Right cardiac atrium (tissue), 5 donors: ENCODE measurements at regions of chr1 and their contacts with region 1.

Region 1: DNA sequence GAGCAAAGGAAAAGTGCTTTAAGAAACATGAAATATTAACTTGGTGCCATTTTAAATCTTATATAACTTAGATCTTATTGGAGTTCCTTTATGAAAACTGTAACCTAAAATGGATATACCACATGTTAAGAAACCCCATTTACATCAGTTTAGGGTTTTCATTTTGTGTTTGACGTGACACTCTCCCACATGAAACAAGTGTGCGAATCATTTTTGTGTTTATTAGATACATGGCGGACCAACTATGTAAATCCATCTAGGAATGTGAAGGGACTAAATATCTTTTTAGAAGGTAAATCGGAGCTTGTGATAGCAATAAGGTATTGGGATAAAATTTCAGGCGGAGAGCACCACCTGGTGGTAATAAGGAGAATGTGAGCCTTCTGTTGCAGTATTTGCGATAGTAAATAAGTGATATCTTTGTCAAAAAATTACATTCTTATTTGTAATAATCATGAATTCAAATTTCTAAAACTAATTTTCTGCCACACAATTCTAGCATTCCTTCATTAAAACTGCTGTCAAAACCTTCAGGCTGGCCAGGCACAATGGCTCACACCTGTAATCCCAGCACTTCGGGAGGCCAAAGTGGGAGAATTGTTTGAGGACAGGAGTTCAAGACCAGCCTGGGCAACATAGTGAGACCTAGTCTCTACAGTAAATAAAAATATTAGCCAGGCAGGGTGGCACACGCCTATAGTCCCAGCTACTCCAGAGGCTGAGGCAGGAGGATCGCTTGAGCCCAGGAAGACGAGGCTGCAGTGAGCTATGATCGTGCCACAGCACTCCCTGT is 31.3 kb downstream of the SMAP2 start:
- DNase-seq: no peak
- ATAC-seq: no peak
- H3K4me3 ChIP-seq: no peak overlapping the region
- H3K27ac ChIP-seq: no peak overlapping the region
- H3K4me1 ChIP-seq: no peaks in the 10 kb centered on the region
- H3K27me3 ChIP-seq: no peaks in the 10 kb centered on the region

Region 2: DNA sequence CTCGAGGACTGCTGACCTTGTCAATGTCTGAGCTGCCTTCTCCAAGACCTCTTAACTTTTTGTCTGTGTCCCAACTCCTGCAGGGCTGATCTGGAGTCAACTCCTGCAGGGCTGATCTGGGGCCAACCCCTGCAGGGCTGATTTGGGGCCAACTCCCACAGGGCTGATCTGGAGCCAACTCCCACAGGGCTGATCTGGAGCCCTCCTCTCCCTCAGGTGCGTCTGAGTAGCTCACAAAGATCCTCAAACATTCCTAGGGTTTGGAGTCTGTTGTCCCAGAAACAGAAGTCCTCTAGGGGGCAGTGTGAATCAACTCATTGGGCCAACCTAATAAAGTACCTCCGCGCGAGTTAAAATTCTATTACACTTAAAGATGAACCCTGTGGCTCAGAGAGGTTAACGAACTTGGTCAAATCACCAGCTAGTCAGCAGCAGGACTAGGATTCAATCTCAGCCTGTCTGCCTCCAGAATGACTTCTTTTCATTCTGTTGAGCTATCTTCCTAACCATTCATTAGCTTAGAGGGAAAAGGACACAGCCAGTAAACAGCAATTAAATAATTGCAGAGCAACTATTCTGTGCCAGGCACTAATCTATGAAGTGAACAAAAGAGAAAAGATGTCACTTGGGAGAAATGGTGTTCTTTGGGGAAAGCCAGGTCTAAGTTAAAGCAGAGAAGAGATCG is 260.8 kb before region 1 on chr1:
- intact Hi-C with region 1: loop called (anchors 5 to 10 kb)
- DNase-seq: peak in 2 of 3 donors; percentile 18 to 48
- ATAC-seq: peak; percentile 78 to 83
- H3K4me3 ChIP-seq: no peak overlapping the region
- H3K27ac ChIP-seq: no peak overlapping the region
- H3K4me1 ChIP-seq: no peaks in the 10 kb centered on the region
- H3K27me3 ChIP-seq: no peaks in the 10 kb centered on the region

Region 3: GRCh38 chr1:40153073-40153770 is 251.6 kb before region 1 on chr1:
- intact Hi-C with region 1: loop called (anchors 5 to 10 kb)
- DNase-seq: no peak
- ATAC-seq: peak; percentile 39 to 43
- H3K4me3 ChIP-seq: no peak overlapping the region
- H3K27ac ChIP-seq: no peak overlapping the region
- H3K4me1 ChIP-seq: no peaks in the 10 kb centered on the region
- H3K27me3 ChIP-seq: no peaks in the 10 kb centered on the region

Region 4: DNA sequence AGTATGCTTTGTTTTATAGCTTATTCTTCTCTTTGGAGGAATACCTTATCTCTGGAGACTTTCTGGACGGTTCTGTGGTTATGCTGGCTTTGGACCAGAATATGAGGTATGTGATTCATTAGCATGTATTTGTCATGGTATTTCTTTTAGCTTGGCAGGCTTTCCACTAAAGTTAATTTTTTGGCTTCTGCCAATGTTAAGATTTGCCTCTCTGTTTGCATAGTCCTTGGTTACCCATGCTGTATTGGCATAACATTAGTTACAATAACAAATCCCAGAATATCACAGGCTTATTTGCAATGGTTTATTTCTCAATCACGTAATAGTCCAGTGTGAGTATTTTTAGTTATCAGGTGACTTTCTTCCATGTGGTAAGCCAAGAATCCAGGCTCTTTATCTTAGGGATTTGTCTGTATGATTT is 137.1 kb before region 1 on chr1:
- intact Hi-C with region 1: no loop called
- DNase-seq: no peak
- ATAC-seq: peak; percentile 92
- H3K4me3 ChIP-seq: no peak overlapping the region
- H3K27ac ChIP-seq: no peak overlapping the region
- H3K4me1 ChIP-seq: peaks cover 2% of the 10 kb centered on the region
- H3K27me3 ChIP-seq: no peaks in the 10 kb centered on the region

Region 5: DNA sequence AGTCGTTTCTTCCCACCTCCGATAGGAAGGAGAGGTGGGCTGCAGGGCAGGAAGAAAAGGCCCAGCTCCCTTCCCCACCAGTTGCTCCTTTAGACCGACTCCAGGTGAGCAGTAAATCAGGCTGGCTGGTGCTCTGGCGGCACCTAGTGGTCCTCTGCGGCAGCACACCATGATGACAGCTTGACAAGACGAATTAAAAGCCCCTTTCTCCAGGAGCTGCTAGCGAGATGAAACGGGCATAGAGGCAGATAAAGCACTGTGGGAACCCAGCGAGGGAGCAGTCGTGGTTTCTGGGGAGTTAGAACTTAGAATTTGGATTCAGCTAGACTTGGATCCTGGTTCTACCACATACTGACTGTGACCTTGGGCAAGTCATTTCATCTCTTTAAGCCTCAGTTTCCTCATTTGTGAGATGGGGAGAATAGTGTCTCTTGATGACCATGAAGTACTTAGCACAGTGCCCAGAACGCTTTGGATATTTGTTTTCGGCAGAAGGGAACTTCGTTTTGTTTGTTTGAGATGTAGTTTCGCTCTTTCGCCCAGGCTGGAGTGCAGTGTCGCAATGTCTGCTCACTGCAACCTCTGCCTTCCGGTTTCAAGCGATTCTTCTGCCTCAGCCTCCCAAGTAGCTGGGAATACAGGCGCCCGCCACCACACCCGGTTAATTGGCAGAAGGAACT is 66.0 kb before region 1 on chr1:
- intact Hi-C with region 1: loop called in 3 of 4 experiments (anchors 10 kb)
- DNase-seq: peak; percentile 71 to 91 (median 90)
- ATAC-seq: peak; percentile 73 to 79
- H3K4me3 ChIP-seq: no peak overlapping the region
- H3K27ac ChIP-seq: no peak overlapping the region
- H3K4me1 ChIP-seq: no peaks in the 10 kb centered on the region
- H3K27me3 ChIP-seq: no peaks in the 10 kb centered on the region

Region 6: DNA sequence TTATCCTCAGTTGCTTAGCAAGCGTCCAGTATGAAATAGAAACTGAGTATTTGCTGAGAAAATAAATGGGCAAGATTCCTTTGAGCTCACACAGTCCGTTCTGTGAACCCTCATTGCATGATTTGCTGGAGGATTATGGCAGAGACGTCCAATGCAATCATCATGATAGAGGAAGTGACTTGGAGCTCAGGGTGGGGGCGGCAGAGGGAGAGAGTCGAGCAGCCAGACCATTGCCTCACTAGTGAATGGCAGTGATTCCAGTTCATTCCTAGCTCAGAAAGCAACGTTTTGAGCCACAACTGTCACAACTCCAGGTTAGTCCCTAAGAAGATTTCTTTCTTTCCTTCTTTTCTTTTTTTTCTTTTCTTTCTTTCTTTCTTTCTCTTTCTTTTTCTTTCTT is 60.3 kb before region 1 on chr1:
- intact Hi-C with region 1: loop called in 3 of 4 experiments (anchors 10 kb)
- DNase-seq: peak; percentile 47 to 79 (median 73)
- ATAC-seq: peak; percentile 73 to 81
- H3K4me3 ChIP-seq: no peak overlapping the region
- H3K27ac ChIP-seq: no peak overlapping the region
- H3K4me1 ChIP-seq: no peaks in the 10 kb centered on the region
- H3K27me3 ChIP-seq: no peaks in the 10 kb centered on the region

Region 7: DNA sequence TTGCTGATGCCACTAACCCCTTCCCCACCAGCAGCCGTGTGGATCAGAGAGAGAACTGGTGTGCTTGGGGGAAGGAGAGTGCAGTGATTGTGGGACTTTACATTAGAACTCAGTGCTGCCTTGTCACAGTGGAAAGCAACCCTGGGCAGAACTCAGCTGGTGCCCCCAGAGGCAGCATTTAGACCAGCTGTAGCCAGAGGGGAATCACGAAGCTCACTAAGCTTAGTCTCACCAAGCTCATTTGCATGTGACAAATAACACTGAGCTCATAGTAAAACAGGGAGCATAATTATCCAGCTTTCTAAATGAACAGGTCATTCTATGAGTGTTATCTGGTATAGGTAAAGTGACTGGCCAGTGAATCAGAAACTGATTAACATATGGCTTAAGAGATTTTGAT is 41.1 kb before region 1 on chr1:
- intact Hi-C with region 1: no loop called
- DNase-seq: no peak
- ATAC-seq: no peak
- H3K4me3 ChIP-seq: no peak overlapping the region
- H3K27ac ChIP-seq: no peak overlapping the region
- H3K4me1 ChIP-seq: no peaks in the 10 kb centered on the region
- H3K27me3 ChIP-seq: no peaks in the 10 kb centered on the region

Region 8: DNA sequence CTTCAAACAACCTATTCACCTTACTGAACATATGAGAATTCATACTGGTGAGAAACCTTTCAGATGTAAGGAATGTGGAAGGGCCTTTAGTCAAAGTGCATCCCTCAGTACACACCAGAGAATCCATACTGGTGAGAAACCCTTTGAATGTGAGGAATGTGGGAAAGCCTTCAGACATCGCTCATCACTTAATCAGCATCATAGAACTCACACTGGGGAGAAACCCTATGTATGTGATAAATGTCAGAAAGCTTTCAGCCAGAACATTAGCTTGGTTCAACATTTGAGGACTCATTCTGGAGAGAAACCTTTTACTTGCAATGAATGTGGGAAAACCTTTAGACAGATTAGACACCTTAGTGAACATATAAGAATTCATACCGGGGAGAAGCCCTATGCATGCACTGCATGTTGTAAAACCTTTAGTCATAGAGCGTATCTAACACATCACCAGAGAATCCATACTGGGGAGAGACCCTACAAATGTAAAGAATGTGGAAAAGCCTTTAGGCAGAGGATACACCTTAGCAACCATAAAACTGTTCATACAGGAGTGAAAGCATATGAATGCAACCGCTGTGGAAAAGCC is 90.5 kb after region 1 on chr1:
- intact Hi-C with region 1: no loop called
- DNase-seq: no peak
- ATAC-seq: no peak
- H3K4me3 ChIP-seq: no peak overlapping the region
- H3K27ac ChIP-seq: no peak overlapping the region
- H3K4me1 ChIP-seq: no peaks in the 10 kb centered on the region
- H3K27me3 ChIP-seq: no peaks in the 10 kb centered on the region